ENCODE measurements at regions of chr4 and their contacts with region 1.

Region 1: DNA sequence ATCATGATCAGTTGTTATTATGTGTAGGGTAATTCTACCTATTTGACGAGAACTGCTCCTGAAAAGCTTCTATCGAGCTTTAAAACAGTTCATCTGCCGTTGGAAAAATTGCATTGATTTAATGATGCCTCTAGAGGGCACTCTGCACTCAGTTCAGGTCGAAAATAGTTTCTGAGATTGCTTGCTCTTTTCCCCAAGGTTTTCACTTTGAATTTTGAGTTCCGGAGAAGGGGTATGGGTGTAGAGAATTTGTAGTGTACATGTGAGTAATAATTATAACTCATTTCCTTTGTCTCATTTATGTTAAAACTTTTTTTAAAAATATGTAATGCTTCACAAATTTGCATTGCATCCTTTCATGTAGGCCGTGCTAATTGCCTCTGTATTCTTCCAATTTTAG is 28.4 kb upstream of the TNIP3 start:
- DNase-seq: peak in 1 of 2 experiments; percentile 18
- ATAC-seq: 0 out of 6 replicates have a peak, but pooled peaks of 1 of the 2 experiments have one; percentile 50
- H3K4me3 ChIP-seq: 0 out of 3 replicates have a peak overlapping the region, but pooled peaks have one; percentile 8
- H3K27ac ChIP-seq: no peak overlapping the region
- H3K4me1 ChIP-seq: no peaks in the 10 kb centered on the region
- CTCF ChIP-seq: peak; percentile 69
- EP300 ChIP-seq: no peak
- POLR2A ChIP-seq: no peak
- RAD21 ChIP-seq: peak; percentile 66 to 72

Region 2: DNA sequence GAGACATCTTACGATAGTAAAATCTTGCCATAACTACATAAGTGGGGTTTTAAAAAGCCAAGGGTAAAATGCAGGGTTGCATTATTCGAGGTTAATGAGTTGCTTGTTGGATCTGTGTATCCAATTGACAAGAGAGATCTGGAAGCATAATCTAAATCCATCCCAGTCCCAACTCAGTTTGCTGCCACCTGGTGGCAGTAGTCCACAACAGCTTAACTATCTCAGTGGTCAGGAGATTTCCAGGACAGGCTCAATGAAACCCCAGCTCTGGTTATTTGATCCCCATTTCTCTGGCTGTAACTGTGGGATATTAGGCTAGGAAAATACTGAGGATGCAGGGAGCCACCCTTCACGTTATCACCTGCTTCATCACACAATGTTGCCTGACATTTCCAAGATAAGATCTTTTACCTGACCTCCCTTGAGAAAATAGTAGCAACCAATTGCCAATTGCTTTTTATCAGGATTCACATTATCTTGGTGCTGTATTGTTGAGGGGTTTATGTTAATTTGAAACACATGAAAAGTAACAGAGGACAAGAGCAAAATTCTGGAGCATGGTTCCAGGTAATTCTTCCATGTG is 59.8 kb after region 1 on chr4:
- CTCF ChIA-PET with region 1: interaction called, 12 read pairs
- POLR2A ChIA-PET with region 1: no interaction called
- DNase-seq: peak; percentile 41 to 60
- ATAC-seq: peak; percentile 87 to 93
- H3K4me3 ChIP-seq: no peak overlapping the region
- H3K27ac ChIP-seq: no peak overlapping the region
- H3K4me1 ChIP-seq: no peaks in the 10 kb centered on the region; the same call in 2 of the 3 replicates
- CTCF ChIP-seq: peak; percentile 68
- EP300 ChIP-seq: no peak
- POLR2A ChIP-seq: no peak
- RAD21 ChIP-seq: peak; percentile 42 to 47; a peak in 4 of 5 replicates

Region 3: DNA sequence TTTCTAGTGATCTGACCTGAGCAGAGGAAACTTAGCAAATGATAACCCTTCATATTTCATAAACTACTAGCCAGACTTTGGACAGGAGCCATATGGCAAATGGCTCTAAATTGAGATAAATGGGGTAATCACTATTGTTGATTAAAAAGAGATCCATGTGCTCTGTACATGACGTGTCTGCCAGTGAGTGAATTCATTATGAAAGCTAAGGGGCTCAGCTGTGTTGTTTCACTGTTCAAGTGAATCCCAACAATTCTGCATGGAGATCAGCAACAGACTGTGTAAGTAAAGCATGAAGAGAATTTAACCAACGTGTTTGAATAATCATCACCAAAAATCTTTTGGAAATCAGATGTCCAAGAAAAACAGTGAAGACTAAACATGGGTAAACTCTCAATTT is 197.9 kb after region 1 on chr4:
- CTCF ChIA-PET with region 1: no interaction called
- POLR2A ChIA-PET with region 1: no interaction called
- DNase-seq: no peak
- ATAC-seq: no peak
- H3K4me3 ChIP-seq: no peak overlapping the region
- H3K27ac ChIP-seq: no peak overlapping the region
- H3K4me1 ChIP-seq: no peaks in the 10 kb centered on the region
- CTCF ChIP-seq: no peak
- EP300 ChIP-seq: no peak
- POLR2A ChIP-seq: no peak
- RAD21 ChIP-seq: no peak

Region 4: GRCh38 chr4:121510341-121510874 is 317.9 kb after region 1 on chr4:
- CTCF ChIA-PET with region 1: no interaction called
- POLR2A ChIA-PET with region 1: no interaction called
- DNase-seq: no peak
- ATAC-seq: no peak
- H3K4me3 ChIP-seq: no peak overlapping the region
- H3K27ac ChIP-seq: no peak overlapping the region
- H3K4me1 ChIP-seq: no peaks in the 10 kb centered on the region
- CTCF ChIP-seq: no peak
- EP300 ChIP-seq: no peak
- POLR2A ChIP-seq: no peak
- RAD21 ChIP-seq: no peak

Measured in A549 (cell line).